ENCODE measurements at regions of chr3 and their contacts with region 1.

Region 1: GRCh38 chr3:122942937-122943827 is 84.4 kb downstream of the SEMA5B start:
- DNase-seq: peak; percentile 49 to 96
- H3K4me3 ChIP-seq: 0 out of 8 replicates have a peak overlapping the region, but pooled peaks of 1 of the 4 experiments have one; percentile 10
- H3K27ac ChIP-seq: no peak overlapping the region
- H3K4me1 ChIP-seq: peaks cover 2 to 18% (median 4%) of the 10 kb centered on the region in 4 experiments; a peak in 6 of 7 replicates
- H3K27me3 ChIP-seq: no peaks in the 10 kb centered on the region; a peak in 3 of 7 replicates
- CTCF ChIP-seq: peak; percentile 78 to 99 (median 96)
- EP300 ChIP-seq: no peak
- POLR2A ChIP-seq: no peak
- RAD21 ChIP-seq: peak; percentile 95 to 98

Region 2: GRCh38 chr3:122395582-122395981 is 547.6 kb before region 1 on chr3:
- CTCF ChIA-PET with region 1: no interaction called
- POLR2A ChIA-PET with region 1: no interaction called
- DNase-seq: no peak
- H3K4me3 ChIP-seq: no peak overlapping the region
- H3K27ac ChIP-seq: no peak overlapping the region
- H3K4me1 ChIP-seq: no peaks in the 10 kb centered on the region
- H3K27me3 ChIP-seq: no peaks in the 10 kb centered on the region
- CTCF ChIP-seq: no peak
- EP300 ChIP-seq: no peak
- POLR2A ChIP-seq: no peak
- RAD21 ChIP-seq: no peak

Region 3: GRCh38 chr3:122800706-122801237 is 142.4 kb before region 1 on chr3:
- CTCF ChIA-PET with region 1: no interaction called
- POLR2A ChIA-PET with region 1: no interaction called
- DNase-seq: no peak
- H3K4me3 ChIP-seq: no peak overlapping the region
- H3K27ac ChIP-seq: no peak overlapping the region
- H3K4me1 ChIP-seq: peaks cover 0 to 3% (median 0%) of the 10 kb centered on the region in 4 experiments; a peak in 1 of 7 replicates
- H3K27me3 ChIP-seq: peaks cover 0 to 7% (median 3%) of the 10 kb centered on the region in 4 experiments; a peak in 3 of 7 replicates
- CTCF ChIP-seq: no peak
- EP300 ChIP-seq: no peak
- POLR2A ChIP-seq: no peak
- RAD21 ChIP-seq: no peak

Region 4: DNA sequence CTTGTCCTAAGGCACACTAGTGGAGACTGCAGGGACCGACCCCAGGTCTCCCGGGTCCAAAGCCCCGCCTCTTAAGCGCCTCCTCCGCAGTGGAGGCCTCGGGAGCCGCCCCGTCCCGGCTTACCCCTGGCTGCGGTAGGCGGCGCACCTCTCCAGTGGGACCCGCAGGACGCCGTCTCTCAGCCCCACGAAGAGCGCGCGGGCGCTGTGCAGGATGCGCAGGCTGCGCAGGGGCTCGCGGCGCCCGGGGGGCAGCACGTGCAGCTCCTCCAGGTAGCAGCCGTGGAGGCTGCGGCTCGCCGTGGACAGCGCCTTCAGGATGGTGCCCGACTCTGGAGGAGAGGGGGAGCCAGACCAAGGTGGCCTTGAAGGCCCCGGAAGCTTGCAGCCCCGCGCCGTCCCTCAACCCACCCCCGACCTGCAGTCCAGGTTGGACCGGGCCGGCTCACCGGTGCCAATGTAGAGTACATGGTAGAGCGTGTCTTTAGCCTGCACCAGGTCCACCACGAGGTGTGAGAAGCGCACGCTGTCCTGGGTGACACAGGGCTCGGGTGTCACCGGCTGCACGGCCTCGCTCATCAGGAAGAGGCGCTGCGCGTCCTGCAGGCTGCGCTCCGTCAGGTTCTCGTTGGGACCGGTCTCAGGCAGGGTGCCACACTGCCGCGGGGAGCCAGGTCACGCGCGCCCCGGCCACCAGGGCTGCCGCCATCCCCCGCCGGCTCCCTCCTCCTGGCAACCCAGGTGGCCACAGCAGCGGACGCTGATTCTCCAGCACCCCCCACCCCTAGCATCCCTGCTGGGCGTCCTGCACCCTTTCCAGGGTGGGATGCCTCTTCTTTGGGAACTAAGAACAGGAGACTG is 21.2 kb before region 1 on chr3:
- CTCF ChIA-PET with region 1: interaction called, 57 read pairs
- POLR2A ChIA-PET with region 1: no interaction called
- DNase-seq: peak in 1 of 2 experiments; percentile 85
- H3K4me3 ChIP-seq: peak overlapping the region; percentile 35 to 62 (median 54)
- H3K27ac ChIP-seq: no peak overlapping the region
- H3K4me1 ChIP-seq: peaks cover 0 to 3% (median 2%) of the 10 kb centered on the region in 4 experiments; a peak in 4 of 7 replicates
- H3K27me3 ChIP-seq: peaks cover 0 to 24% (median 17%) of the 10 kb centered on the region in 4 experiments; a peak in 5 of 7 replicates
- CTCF ChIP-seq: peak; percentile 42 to 53 (median 45)
- EP300 ChIP-seq: no peak
- POLR2A ChIP-seq: no peak
- RAD21 ChIP-seq: peak; percentile 32 to 56

Region 5: DNA sequence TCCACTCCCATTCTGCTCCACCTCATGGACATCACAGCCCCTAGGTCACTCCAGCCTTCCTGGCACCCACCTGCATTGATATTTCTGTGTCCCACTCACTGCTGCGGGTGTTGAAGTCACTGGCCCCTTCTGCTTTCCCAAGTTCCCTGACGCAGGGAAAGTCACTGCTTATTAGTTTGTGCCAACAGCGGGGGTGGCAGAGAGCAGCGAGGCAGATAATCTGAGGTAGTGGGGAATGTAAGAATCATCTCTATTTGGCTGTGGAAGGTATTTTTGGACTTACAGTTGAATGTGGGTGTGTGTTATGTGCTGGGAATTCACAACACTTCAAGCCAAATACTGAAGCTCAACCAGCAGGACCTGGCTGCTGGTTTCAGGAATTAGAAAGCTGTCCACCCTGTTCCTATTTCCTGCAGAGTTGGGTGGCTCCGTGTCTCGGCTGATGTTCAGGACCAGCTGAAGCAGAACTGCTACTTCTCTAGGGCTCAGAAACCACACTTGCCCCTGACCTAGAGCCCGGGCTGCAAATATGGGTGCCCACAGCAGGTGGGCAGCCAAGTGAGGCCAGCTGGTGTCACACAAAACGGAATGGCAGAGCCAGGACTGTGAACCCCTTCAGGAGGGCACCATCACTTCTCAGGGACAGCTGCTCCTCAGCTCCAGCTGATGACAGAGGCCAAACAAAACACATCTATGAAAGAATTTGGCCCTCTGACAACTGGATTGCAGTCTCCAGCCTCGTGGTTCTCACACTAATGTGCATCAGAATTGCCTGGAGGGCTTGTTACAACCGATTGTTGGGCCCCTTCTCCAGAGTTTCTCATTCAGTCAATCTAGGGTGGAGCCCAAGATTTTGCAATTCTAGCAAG is 26.6 kb after region 1 on chr3:
- CTCF ChIA-PET with region 1: interaction called, 17 read pairs
- POLR2A ChIA-PET with region 1: no interaction called
- DNase-seq: no peak
- H3K4me3 ChIP-seq: no peak overlapping the region
- H3K27ac ChIP-seq: no peak overlapping the region
- H3K4me1 ChIP-seq: peaks cover 0 to 14% (median 9%) of the 10 kb centered on the region in 4 experiments; a peak in 6 of 7 replicates
- H3K27me3 ChIP-seq: no peaks in the 10 kb centered on the region
- CTCF ChIP-seq: no peak
- EP300 ChIP-seq: no peak
- POLR2A ChIP-seq: no peak
- RAD21 ChIP-seq: no peak

Region 6: GRCh38 chr3:122993124-122993978 is 50.2 kb after region 1 on chr3:
- CTCF ChIA-PET with region 1: interaction called, 28 read pairs
- POLR2A ChIA-PET with region 1: no interaction called
- DNase-seq: no peak
- H3K4me3 ChIP-seq: no peak overlapping the region
- H3K27ac ChIP-seq: no peak overlapping the region
- H3K4me1 ChIP-seq: peaks cover 7 to 22% (median 12%) of the 10 kb centered on the region in 4 experiments
- H3K27me3 ChIP-seq: no peaks in the 10 kb centered on the region; a peak in 1 of 7 replicates
- CTCF ChIP-seq: no peak
- EP300 ChIP-seq: no peak
- POLR2A ChIP-seq: no peak
- RAD21 ChIP-seq: peak; percentile 25 to 36; a peak in 3 of 4 replicates

Region 7: GRCh38 chr3:123021996-123022510 is 78.9 kb after region 1 on chr3:
- CTCF ChIA-PET with region 1: interaction called, 151 read pairs
- POLR2A ChIA-PET with region 1: interaction called, 4 read pairs
- DNase-seq: no peak
- H3K4me3 ChIP-seq: peak overlapping the region in 1 of 4 experiments; percentile 39; a peak in 3 of 8 replicates
- H3K27ac ChIP-seq: no peak overlapping the region
- H3K4me1 ChIP-seq: peaks cover 15 to 40% (median 25%) of the 10 kb centered on the region in 4 experiments; a peak in 6 of 7 replicates
- H3K27me3 ChIP-seq: peaks cover 0 to 11% (median 4%) of the 10 kb centered on the region in 4 experiments; a peak in 4 of 7 replicates
- CTCF ChIP-seq: no peak
- EP300 ChIP-seq: no peak
- POLR2A ChIP-seq: no peak
- RAD21 ChIP-seq: no peak